Body of pancreas (tissue), 4 donors: ENCODE measurements at regions of chr4 and their contacts with region 1.

Region 1: DNA sequence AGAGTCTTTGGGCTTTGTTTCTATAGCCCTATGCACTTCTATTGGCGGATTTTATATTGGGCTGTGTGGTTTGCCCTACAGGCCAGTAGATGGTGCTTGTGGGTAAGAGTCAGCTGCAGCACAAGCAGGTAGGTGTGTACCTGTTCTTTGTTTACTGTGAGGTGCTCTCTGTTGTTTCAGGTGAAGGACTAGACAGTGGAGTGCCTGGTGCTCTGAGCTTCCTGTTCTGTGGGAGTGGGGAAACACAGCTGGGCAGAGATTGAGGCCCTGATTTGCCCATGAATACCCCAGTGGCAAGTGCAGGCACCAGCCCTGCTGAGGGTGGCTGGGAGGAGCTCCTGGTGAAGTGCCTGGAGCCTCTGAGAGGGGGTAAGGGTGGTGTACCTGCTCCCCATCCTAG is 26.3 kb upstream of the UCP1 start:
- DNase-seq: peak; percentile 39 to 56 (median 52)
- ATAC-seq: peak; percentile 89
- H3K4me3 ChIP-seq: no peak overlapping the region
- H3K27ac ChIP-seq: no peak overlapping the region
- H3K4me1 ChIP-seq: no peaks in the 10 kb centered on the region
- H3K27me3 ChIP-seq: no peaks in the 10 kb centered on the region
- CTCF ChIP-seq: peak; percentile 46 to 82 (median 73)
- POLR2A ChIP-seq: no peak

Region 2: DNA sequence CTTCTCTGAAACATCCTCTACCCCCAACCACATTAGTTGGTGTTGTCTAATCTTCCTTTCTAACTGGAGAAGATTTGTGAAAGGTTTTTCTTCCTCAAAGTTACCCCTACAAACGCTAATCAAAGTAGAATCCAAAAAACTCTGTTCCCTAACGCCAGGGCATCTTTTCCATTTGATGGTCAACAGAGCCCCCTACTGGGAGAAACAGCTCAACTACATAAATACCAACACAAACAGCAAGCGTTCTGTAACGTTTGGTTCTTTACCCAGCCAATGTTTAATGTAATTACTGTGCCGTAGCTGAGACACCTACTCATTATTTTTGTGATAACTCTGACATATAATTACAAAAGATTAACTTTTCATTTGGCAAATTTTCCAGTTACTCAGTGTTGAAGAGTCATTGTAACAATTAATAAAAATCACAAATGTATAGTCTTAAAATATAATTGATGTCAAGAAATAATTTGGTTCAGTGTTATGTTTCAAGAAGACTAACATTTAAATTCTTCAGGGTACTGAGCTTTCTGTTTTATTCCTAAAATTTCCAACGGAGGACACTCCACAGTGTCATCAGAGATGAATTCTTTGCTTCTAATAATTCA is 256.1 kb after region 1 on chr4:
- intact Hi-C with region 1: loop called (anchors 5 kb)
- DNase-seq: peak; percentile 41 to 65 (median 46)
- ATAC-seq: peak; percentile 82
- H3K4me3 ChIP-seq: no peak overlapping the region
- H3K27ac ChIP-seq: no peak overlapping the region
- H3K4me1 ChIP-seq: no peaks in the 10 kb centered on the region
- H3K27me3 ChIP-seq: no peaks in the 10 kb centered on the region
- CTCF ChIP-seq: peak; percentile 47 to 89 (median 82)
- POLR2A ChIP-seq: no peak